Left ventricle myocardium superior (tissue), 1 donor: ENCODE measurements at regions of chr6 and their contacts with region 1.

Region 1: DNA sequence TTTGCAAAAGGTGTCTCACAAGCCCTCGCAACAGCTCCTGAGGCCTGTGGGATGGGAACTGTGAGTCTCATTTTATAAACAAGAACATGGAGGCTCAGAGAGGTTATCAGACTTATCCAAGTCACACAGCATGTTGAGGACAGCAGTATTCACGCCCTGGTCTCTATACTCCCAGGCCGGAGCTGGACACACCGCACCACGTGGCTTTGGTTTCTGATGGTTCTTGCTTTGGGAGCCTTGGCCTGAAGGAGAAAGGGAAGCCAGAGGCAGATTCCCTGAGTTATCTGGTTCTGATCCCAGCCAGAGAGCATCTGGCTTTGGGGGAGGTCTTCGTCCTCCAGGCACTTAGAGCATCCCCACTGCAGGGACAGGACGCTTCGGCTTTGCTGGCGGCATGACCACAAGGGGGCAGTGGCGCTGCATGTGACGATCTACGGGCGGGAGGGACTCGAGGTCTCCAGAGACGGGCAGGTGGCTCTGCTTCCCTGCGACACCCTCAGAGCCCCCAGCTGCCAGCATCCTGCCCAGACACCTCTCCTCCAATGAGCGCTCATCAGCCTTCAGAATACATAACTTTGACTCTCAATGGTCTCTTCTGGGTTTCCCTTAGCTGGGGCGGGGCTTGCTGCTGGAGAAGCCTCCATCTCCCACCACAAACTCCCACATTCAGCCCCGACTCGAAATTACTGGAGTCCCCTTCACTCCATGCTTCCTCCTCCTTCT is 51.4 kb upstream of the SAYSD1 start:
- DNase-seq: peak; percentile 82
- ATAC-seq: peak; percentile 80

Region 2: DNA sequence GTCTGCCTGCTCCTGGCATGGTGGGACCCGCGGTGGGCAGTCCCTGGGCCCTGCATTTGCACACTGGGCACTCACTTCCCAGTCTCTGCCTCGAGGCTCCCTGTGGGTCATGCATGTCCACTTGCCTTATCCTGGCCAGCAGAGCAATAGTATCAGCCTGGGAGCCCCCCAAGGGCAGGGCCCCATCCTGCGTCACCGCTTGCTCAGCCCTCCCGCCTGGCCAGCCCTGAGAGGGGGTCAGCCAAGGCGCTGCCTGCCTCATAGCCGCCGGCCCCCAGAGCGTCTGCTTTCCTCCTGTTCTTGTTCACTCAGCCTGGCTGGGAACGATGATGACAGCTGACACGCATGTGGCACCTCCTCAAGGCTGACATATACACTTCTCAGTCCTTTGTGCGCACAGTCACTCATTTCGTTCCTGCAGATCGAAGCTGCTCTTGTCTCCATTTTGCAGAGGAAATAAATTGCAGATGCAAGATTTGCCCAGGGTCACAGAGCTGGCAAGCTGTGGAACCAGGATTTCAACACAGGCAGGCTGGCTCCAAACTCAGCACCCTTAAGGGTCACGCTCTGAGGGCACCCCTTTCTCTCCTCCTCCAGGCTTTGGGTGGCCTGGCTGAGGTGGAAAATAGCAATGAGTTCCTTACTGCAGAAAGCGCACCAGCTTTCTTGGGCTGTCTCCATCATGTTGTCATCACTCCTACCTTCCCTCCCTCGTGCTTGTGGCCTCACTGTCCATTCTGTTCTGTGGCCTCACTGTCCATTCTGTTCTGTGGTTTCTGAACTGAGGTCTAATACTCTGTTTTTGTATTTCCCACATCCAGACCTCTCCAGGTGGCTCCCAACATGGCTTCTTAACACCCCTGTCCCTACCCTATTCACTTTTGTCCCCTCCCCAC is 130.6 kb after region 1 on chr6:
- intact Hi-C with region 1: loop called (anchors 5 kb)
- DNase-seq: peak; percentile 72
- ATAC-seq: peak; percentile 90

Region 3: GRCh38 chr6:39610221-39610620 is 443.9 kb after region 1 on chr6:
- intact Hi-C with region 1: no loop called
- DNase-seq: no peak
- ATAC-seq: peak; percentile 47